Activated B cell treated with CpG ODN at 0.5 μM for 24 hours (primary cell): ENCODE measurements at regions of chr7 and their contacts with region 1.

Region 1: DNA sequence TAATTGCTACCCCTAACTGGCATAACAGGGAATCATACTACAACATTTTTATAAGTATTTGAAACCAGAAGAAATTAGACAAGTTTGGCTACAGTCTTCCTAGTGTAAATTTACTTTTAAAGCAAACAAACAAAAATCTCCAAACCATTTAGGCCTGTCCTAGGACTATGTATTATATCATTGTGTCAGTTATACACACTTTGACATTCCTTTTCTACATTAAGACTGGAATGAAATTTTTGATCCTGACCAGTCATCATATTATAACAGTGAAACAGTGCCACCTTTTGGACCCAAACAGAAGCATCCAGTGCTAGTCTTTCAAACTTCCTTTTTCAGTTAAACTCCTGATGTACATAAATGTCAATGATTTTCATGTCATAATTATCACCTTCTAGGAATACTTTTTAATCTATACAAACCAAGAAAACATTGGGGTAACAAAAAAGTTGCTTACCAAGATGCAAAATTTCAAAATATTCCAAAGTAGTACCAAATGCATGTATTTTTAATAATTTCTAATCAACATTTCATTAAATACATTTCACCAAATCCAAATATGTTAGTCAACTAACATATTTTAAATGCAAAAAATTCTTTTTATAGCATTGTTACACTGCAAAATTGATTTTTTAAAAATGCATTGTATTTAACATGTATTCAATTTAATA is 75.7 kb downstream of the IMMP2L start:
- DNase-seq: no peak
- ATAC-seq: peak; percentile 61
- H3K4me3 Mint-ChIP-seq: no peak overlapping the region
- H3K27ac Mint-ChIP-seq: no peak overlapping the region
- H3K4me1 Mint-ChIP-seq: peaks cover 1% of the 10 kb centered on the region
- H3K27me3 Mint-ChIP-seq: no peaks in the 10 kb centered on the region
- CTCF ChIP-seq: no peak

Region 2: DNA sequence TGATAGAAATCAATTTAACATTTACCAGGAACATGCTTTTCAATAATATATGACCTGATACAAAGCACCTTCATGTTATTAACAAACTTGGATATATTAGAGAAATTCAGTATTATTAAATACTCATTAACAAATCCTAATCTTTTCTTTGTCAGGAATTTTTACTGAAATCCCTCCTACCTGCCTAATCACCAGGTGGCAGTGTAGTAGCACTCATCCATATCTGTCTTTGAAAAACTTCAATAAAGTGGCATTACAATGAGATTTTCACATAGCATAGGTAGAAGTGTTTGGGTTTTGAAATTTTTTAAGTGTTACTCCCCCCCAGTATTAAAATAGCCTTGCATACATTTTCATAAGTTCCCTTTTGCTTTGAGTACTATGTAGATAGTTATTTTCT is 1642.2 kb before region 1 on chr7:
- CTCF ChIA-PET with region 1: no interaction called
- POLR2A ChIA-PET with region 1: no interaction called
- intact Hi-C with region 1: loop called (anchors 1 kb)
- DNase-seq: no peak
- ATAC-seq: no peak
- H3K4me3 Mint-ChIP-seq: no peak overlapping the region
- H3K27ac Mint-ChIP-seq: no peak overlapping the region
- H3K4me1 Mint-ChIP-seq: no peaks in the 10 kb centered on the region
- H3K27me3 Mint-ChIP-seq: no peaks in the 10 kb centered on the region
- CTCF ChIP-seq: no peak

Region 3: DNA sequence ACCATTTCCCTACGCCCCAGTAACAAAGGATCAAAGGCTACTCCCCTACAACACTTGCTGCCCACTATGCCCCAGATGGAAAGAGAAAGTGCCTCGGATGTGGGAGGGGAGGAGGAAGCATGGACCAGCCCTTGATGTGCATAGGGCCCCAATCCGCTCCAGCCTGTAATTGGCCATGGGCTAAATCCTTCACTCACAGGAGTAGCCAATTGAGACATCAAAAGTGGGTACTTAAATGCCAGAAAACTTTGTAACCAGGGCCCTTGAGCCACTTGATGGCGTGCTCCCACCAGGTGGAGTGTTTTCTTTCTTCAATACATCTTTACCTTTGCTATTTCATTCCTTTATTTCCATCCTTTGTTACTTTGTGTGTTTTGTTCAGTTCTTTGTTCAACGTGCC is 896.2 kb before region 1 on chr7:
- CTCF ChIA-PET with region 1: no interaction called
- POLR2A ChIA-PET with region 1: no interaction called
- intact Hi-C with region 1: loop called (anchors 2 kb)
- DNase-seq: no peak
- ATAC-seq: no peak
- H3K4me3 Mint-ChIP-seq: no peak overlapping the region
- H3K27ac Mint-ChIP-seq: no peak overlapping the region
- H3K4me1 Mint-ChIP-seq: no peaks in the 10 kb centered on the region
- H3K27me3 Mint-ChIP-seq: no peaks in the 10 kb centered on the region
- CTCF ChIP-seq: no peak

Region 4: DNA sequence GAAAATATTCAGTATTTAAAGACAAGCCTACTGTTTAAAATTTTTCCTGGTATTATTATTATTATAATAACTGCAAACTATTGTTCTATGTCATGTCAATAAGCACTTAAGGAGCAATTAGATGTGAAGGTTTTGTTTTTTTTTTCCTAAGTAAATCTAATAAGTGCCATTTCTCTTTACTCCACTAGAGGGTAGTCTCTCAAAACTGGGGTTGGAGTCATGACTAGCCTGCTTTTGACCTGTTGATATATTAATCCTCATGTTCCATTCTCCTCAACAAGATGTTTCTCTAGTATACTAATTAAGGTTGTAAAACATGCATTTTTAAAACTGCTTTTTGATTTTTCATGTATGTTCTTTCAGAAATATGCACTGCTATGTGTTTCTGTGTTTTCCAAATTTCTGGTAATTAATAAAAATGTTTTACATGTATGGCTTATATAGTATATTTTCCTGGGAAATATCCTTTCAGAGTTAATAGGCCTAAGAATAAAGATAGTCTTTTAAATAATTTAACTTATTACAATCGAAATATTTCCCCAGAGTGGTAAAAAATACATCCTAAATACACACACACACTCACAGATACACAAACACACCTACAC is 396.7 kb before region 1 on chr7:
- CTCF ChIA-PET with region 1: no interaction called
- POLR2A ChIA-PET with region 1: no interaction called
- intact Hi-C with region 1: loop called (anchors 1 kb)
- DNase-seq: no peak
- ATAC-seq: peak; percentile 55
- H3K4me3 Mint-ChIP-seq: no peak overlapping the region
- H3K27ac Mint-ChIP-seq: no peak overlapping the region
- H3K4me1 Mint-ChIP-seq: peaks cover 12% of the 10 kb centered on the region
- H3K27me3 Mint-ChIP-seq: no peaks in the 10 kb centered on the region
- CTCF ChIP-seq: peak; percentile 77

Region 5: DNA sequence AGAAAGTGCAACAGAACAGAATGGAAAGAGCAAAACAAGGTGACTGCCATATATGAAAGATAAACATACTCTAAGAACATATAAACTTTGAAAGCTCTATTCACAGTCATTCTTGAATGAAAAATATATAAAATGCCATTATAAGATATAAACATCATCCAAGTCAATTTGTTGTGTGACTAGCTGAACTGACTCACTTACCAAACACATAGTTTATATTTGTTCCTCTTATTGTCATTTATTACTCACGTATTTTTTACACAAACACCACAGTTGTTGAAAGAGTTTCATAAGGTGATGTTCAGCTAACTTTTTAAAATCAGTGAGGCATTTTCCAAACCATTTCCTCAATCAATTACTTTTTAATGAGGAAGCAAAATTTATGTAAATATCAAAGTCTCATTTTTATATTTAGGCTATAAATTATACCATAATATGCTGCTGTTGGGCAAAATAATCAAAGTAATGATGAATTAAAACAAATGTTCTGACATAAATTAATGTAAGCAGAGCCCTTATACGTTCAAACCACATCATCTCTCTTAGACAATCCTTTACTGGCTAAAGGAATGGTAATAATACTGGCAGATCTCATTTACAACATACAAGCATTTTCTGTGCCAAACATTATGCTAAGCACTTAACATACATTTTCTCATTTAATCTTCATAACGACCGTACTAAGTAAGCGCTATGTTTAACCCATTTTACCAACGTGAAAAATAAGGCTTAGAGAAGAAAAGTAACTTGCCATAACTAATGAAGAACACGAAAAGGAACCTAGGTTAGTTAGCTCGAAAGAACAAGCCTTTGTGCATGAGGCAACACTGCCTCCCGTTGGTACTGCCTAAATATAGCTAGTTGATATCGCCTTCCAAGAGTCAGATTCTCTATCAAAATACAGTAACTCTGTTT is 388.3 kb before region 1 on chr7:
- CTCF ChIA-PET with region 1: interaction called, 4 read pairs
- POLR2A ChIA-PET with region 1: interaction called, 5 read pairs
- intact Hi-C with region 1: loop called (anchors 2 kb)
- DNase-seq: peak; percentile 19
- ATAC-seq: peak; percentile 86
- H3K4me3 Mint-ChIP-seq: no peak overlapping the region
- H3K27ac Mint-ChIP-seq: peak overlapping the region; percentile 18
- H3K4me1 Mint-ChIP-seq: peaks cover 17% of the 10 kb centered on the region
- H3K27me3 Mint-ChIP-seq: no peaks in the 10 kb centered on the region
- CTCF ChIP-seq: peak; percentile 64

Region 6: GRCh38 chr7:111232249-111233084 is 254.1 kb before region 1 on chr7:
- CTCF ChIA-PET with region 1: no interaction called
- POLR2A ChIA-PET with region 1: no interaction called
- intact Hi-C with region 1: loop called (anchors 5 kb)
- DNase-seq: no peak
- ATAC-seq: peak; percentile 31
- H3K4me3 Mint-ChIP-seq: no peak overlapping the region
- H3K27ac Mint-ChIP-seq: no peak overlapping the region
- H3K4me1 Mint-ChIP-seq: peaks cover 7% of the 10 kb centered on the region
- H3K27me3 Mint-ChIP-seq: no peaks in the 10 kb centered on the region
- CTCF ChIP-seq: no peak

Region 7: GRCh38 chr7:111735661-111736551 is 249.3 kb after region 1 on chr7:
- CTCF ChIA-PET with region 1: no interaction called
- POLR2A ChIA-PET with region 1: no interaction called
- intact Hi-C with region 1: loop called (anchors 2 kb)
- DNase-seq: no peak
- ATAC-seq: peak; percentile 34
- H3K4me3 Mint-ChIP-seq: no peak overlapping the region
- H3K27ac Mint-ChIP-seq: no peak overlapping the region
- H3K4me1 Mint-ChIP-seq: no peaks in the 10 kb centered on the region
- H3K27me3 Mint-ChIP-seq: peaks cover 2% of the 10 kb centered on the region
- CTCF ChIP-seq: peak; percentile 89